ENCODE measurements at regions of chr9 and their contacts with region 1.

Region 1: DNA sequence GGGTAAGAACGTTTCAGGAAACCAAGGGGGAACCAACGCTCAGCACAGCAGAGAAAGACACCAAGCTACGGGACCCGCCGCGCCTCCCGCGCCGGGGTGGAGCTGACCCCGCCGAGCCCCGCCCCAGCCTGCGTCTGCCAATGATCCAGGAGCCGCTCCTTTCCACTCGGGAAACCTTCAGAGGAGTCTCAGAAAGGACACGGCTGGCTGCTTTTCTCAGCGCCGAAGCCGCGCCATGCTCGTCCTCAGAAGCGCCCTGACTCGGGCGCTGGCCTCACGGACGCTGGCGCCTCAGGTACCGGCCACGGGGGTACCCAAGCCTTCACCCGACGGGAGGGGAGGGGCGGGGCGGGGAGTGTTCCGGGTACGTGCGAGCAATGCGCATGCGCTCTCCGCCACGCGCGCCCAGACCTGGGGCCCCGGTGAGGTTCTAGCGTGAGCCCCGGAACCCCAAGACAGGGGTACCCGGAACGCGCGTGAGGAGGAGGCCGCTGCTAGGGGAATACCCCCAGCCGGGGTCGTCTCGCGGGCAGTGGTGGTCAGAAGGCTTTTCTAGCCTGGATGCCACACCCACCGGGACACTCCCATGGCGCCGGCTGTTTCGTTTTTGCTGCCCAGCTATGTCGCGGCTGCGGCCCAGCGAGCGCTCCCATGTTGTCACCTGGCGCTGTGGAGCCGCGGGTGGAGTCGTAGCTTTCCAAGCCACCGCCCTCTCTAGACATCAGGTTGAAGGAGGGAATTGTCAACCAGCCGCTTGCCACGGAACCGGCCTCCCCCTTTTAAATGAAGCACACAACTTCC is at the start of gene NIPSNAP3A:
- DNase-seq: peak; percentile 77 to 94 (median 84)
- ATAC-seq: peak; percentile 86
- H3K4me3 ChIP-seq: peak within 1 kb of the TSS; percentile 88
- H3K4me3 Mint-ChIP-seq: peak within 1 kb of the TSS; percentile 96
- H3K27ac ChIP-seq: peak within 1 kb of the TSS; percentile 74 to 89
- H3K27ac Mint-ChIP-seq: peak within 1 kb of the TSS; percentile 96
- H3K4me1 ChIP-seq: peaks cover 17% of the 10 kb centered on the region
- H3K4me1 Mint-ChIP-seq: peaks cover 24% of the 10 kb centered on the region
- H3K27me3 ChIP-seq: no peaks in the 10 kb centered on the region
- H3K27me3 Mint-ChIP-seq: no peaks in the 10 kb centered on the region
- CTCF ChIP-seq: no peak
- total RNA-seq, gene NIPSNAP3A: 9.0 to 10.6 TPM

Region 2: GRCh38 chr9:103397868-103398600 is 1349.7 kb before region 1 on chr9:
- CTCF ChIA-PET with region 1: no interaction called
- POLR2A ChIA-PET with region 1: no interaction called
- intact Hi-C with region 1: loop called in 1 of 2 experiments (anchors 2 kb)
- DNase-seq: peak in 5 of 14 experiments; percentile 2 to 33 (median 10)
- ATAC-seq: peak; percentile 57
- H3K4me3 ChIP-seq: no peak overlapping the region
- H3K4me3 Mint-ChIP-seq: no peak overlapping the region
- H3K27ac ChIP-seq: no peak overlapping the region
- H3K27ac Mint-ChIP-seq: no peak overlapping the region
- H3K4me1 ChIP-seq: no peaks in the 10 kb centered on the region
- H3K4me1 Mint-ChIP-seq: no peaks in the 10 kb centered on the region
- H3K27me3 ChIP-seq: no peaks in the 10 kb centered on the region
- H3K27me3 Mint-ChIP-seq: no peaks in the 10 kb centered on the region
- CTCF ChIP-seq: peak; percentile 37

Region 3: GRCh38 chr9:104093647-104094533 is 653.9 kb before region 1 on chr9 and contains the start of gene SMC2:
- CTCF ChIA-PET with region 1: no interaction called
- POLR2A ChIA-PET with region 1: interaction called, 25 read pairs
- intact Hi-C with region 1: loop called in 1 of 2 experiments (anchors 5 kb)
- DNase-seq: peak; percentile 90 to 96 (median 92)
- ATAC-seq: peak; percentile 93
- H3K4me3 ChIP-seq: peak within 1 kb of the TSS; percentile 71
- H3K4me3 Mint-ChIP-seq: peak within 1 kb of the TSS; percentile 99
- H3K27ac ChIP-seq: peak within 1 kb of the TSS; percentile 80 to 92
- H3K27ac Mint-ChIP-seq: peak within 1 kb of the TSS; percentile 99
- H3K4me1 ChIP-seq: peaks cover 15% of the 10 kb centered on the region
- H3K4me1 Mint-ChIP-seq: peaks cover 60% of the 10 kb centered on the region
- H3K27me3 ChIP-seq: no peaks in the 10 kb centered on the region
- H3K27me3 Mint-ChIP-seq: no peaks in the 10 kb centered on the region
- CTCF ChIP-seq: no peak
- total RNA-seq, gene SMC2: 2.6 to 2.9 TPM

Region 4: GRCh38 chr9:104177003-104177611 is 570.7 kb before region 1 on chr9:
- CTCF ChIA-PET with region 1: no interaction called
- POLR2A ChIA-PET with region 1: no interaction called
- intact Hi-C with region 1: loop called (anchors 2 to 5 kb)
- DNase-seq: peak in 3 of 14 experiments; percentile 1 to 6 (median 3)
- ATAC-seq: no peak
- H3K4me3 ChIP-seq: no peak overlapping the region
- H3K4me3 Mint-ChIP-seq: no peak overlapping the region
- H3K27ac ChIP-seq: no peak overlapping the region
- H3K27ac Mint-ChIP-seq: no peak overlapping the region
- H3K4me1 ChIP-seq: no peaks in the 10 kb centered on the region
- H3K4me1 Mint-ChIP-seq: no peaks in the 10 kb centered on the region
- H3K27me3 ChIP-seq: no peaks in the 10 kb centered on the region
- H3K27me3 Mint-ChIP-seq: peaks cover 4% of the 10 kb centered on the region
- CTCF ChIP-seq: no peak

Region 5: GRCh38 chr9:104968025-104968982 is 220.5 kb after region 1 on chr9:
- CTCF ChIA-PET with region 1: no interaction called
- POLR2A ChIA-PET with region 1: no interaction called
- intact Hi-C with region 1: loop called in 1 of 2 experiments (anchors 10 kb)
- DNase-seq: peak; percentile 80 to 92 (median 86)
- ATAC-seq: peak; percentile 97
- H3K4me3 ChIP-seq: peak overlapping the region; percentile 75
- H3K4me3 Mint-ChIP-seq: peak overlapping the region; percentile 95
- H3K27ac ChIP-seq: no peak overlapping the region
- H3K27ac Mint-ChIP-seq: peak overlapping the region; percentile 77
- H3K4me1 ChIP-seq: peaks cover 14% of the 10 kb centered on the region
- H3K4me1 Mint-ChIP-seq: peaks cover 27% of the 10 kb centered on the region
- H3K27me3 ChIP-seq: no peaks in the 10 kb centered on the region
- H3K27me3 Mint-ChIP-seq: peaks cover 8% of the 10 kb centered on the region
- CTCF ChIP-seq: no peak

Region 6: GRCh38 chr9:105118636-105119035 is 370.9 kb after region 1 on chr9:
- CTCF ChIA-PET with region 1: no interaction called
- POLR2A ChIA-PET with region 1: no interaction called
- intact Hi-C with region 1: no loop called
- DNase-seq: no peak
- ATAC-seq: no peak
- H3K4me3 ChIP-seq: no peak overlapping the region
- H3K4me3 Mint-ChIP-seq: no peak overlapping the region
- H3K27ac ChIP-seq: no peak overlapping the region
- H3K27ac Mint-ChIP-seq: no peak overlapping the region
- H3K4me1 ChIP-seq: peaks cover 29% of the 10 kb centered on the region
- H3K4me1 Mint-ChIP-seq: peaks cover 45% of the 10 kb centered on the region
- H3K27me3 ChIP-seq: no peaks in the 10 kb centered on the region
- H3K27me3 Mint-ChIP-seq: no peaks in the 10 kb centered on the region
- CTCF ChIP-seq: no peak

Region 7: GRCh38 chr9:105414947-105415661 is 667.3 kb after region 1 on chr9:
- CTCF ChIA-PET with region 1: no interaction called
- POLR2A ChIA-PET with region 1: no interaction called
- intact Hi-C with region 1: loop called in 1 of 2 experiments (anchors 10 kb)
- DNase-seq: peak; percentile 19 to 84 (median 48)
- ATAC-seq: peak; percentile 86
- H3K4me3 ChIP-seq: no peak overlapping the region
- H3K4me3 Mint-ChIP-seq: no peak overlapping the region
- H3K27ac ChIP-seq: no peak overlapping the region
- H3K27ac Mint-ChIP-seq: no peak overlapping the region
- H3K4me1 ChIP-seq: peaks cover 3% of the 10 kb centered on the region
- H3K4me1 Mint-ChIP-seq: peaks cover 4% of the 10 kb centered on the region
- H3K27me3 ChIP-seq: peaks cover 9 to 19% of the 10 kb centered on the region in 2 experiments
- H3K27me3 Mint-ChIP-seq: peaks cover 51% of the 10 kb centered on the region
- CTCF ChIP-seq: peak; percentile 94

Measured in CD4-positive, alpha-beta T cell (primary cell).